ENCODE measurements at regions of chr1 and their contacts with region 1.

Region 1: DNA sequence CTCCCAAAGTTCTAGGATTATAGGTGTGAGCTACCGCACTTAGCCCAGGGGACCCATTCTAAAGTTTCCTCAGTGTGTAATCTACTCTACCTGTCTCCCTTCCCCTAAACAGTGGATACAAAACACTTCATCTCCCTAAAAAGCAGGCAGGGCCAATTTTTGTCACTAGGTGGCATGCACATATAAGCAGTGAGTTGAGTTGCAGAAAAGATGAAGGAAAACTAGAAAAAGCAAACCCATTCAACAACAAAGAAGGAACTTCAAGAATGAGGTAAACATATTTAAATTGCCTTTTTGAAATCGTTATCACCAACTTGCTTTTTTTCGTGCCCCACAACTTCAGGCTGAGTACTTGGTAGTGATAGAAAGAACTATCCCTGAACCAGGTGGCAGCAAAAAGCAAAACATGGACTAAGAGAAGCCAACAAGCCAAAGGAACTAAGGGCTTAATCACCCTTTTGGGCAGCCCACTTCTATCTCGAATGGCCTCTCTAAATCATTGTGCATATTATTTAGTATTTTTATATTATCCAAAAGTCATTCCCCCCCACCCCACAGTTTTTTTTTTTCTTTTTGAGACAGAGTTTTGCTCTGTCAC is 19.7 kb upstream of the ALDH9A1 start:
- DNase-seq: peak; percentile 60
- H3K4me3 ChIP-seq: no peak overlapping the region
- H3K27ac ChIP-seq: no peak overlapping the region
- H3K4me1 ChIP-seq: no peaks in the 10 kb centered on the region
- H3K27me3 ChIP-seq: no peaks in the 10 kb centered on the region
- CTCF ChIP-seq: peak; percentile 51 to 76 (median 65)
- EP300 ChIP-seq: no peak
- POLR2A ChIP-seq: no peak

Region 2: DNA sequence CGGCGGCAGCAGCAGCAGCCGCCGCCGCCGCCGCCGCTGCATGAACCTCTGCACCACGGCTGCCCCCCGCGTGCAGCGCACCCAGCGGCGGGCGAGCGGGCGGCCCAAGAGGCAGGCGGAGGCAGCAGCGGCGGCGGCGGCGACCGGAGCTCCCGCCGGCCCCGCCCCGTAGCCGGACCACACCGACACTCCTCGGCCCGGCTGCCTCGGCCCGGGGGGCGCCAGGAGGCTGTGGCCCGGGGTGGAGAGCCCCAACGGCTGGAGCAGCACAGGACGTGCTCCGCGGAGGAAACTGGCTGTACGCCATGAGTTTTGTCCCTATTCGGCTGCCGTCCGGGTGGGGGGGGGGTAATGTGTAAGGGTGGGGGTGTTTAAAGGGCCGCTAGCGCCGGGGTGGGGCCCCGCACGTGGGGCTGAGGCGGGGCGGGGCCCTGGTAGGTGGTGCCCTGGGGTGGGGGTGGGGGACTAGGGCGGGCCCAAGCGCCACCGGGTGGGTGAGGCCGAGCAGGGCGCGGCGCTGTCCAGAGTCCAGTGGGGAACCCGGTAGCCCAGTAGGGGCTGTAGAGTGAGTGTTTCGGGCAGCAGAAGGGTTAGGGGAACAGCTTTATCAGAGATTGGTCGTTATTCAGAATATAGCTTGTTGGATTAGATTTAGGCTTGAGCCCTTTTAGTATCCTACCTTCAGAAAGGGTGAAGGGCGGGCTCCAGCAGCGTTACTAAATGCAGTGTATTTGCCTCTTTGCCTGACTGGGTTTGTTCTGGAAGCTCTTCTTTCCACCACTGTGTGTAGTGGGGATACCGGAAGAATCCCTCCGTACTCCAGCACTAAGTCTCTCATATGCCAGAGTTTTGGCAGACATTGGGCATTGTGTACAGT is 448.9 kb after region 1 on chr1 and contains the start of gene FAM78B:
- in situ Hi-C with region 1: loop called in 1 of 4 experiments (anchors 25 kb)
- intact Hi-C with region 1: no loop called
- DNase-seq: peak; percentile 87
- H3K4me3 ChIP-seq: peak within 1 kb of the TSS; percentile 62 to 84 (median 68)
- H3K27ac ChIP-seq: peak within 1 kb of the TSS; percentile 59 to 85 (median 74)
- H3K4me1 ChIP-seq: peaks cover 11 to 37% (median 26%) of the 10 kb centered on the region in 4 donors
- H3K27me3 ChIP-seq: peaks cover 29% of the 10 kb centered on the region
- CTCF ChIP-seq: peak in 2 of 5 experiments; percentile 7 to 29
- EP300 ChIP-seq: no peak
- POLR2A ChIP-seq: peak; percentile 69
- total RNA-seq, gene FAM78B: 0.40 to 5.2 (median 0.80) TPM